PC-9 (cell line): ENCODE measurements at regions of chr18 and their contacts with region 1.

Region 1: DNA sequence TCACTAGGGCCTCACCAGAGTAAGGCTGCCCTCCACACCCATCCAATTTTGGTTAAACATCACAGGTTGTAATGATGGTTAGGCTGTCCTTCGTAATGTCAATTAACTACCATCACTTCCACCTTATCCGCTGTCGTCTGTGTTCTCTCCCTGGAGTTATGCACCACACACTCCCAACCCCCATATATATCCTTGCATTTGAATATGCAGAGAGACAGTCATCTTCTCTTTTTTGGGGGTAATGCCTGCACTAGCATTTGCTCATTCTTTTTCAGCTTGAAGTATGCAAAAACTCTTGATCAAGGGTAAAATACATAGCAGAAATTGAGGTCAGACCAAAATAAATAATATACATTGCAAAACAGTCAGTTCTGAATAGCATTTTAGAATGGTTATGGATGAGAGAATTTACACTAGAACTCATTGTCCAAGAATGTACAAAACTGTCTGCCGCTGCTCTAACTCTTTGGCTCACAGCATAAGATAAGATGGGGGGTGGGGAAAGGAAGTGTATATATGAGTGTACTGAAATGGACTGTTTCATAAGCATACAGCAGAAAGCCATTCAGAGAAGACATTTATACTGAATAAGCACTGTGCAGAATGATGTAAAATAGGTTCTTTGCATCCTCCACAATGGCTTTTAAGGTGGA is 397.8 kb upstream of the CHST9 start:
- DNase-seq: no peak
- H3K4me3 ChIP-seq: no peak overlapping the region
- H3K27ac ChIP-seq: no peak overlapping the region
- H3K4me1 ChIP-seq: no peaks in the 10 kb centered on the region
- H3K27me3 ChIP-seq: no peaks in the 10 kb centered on the region
- CTCF ChIP-seq: no peak

Region 2: DNA sequence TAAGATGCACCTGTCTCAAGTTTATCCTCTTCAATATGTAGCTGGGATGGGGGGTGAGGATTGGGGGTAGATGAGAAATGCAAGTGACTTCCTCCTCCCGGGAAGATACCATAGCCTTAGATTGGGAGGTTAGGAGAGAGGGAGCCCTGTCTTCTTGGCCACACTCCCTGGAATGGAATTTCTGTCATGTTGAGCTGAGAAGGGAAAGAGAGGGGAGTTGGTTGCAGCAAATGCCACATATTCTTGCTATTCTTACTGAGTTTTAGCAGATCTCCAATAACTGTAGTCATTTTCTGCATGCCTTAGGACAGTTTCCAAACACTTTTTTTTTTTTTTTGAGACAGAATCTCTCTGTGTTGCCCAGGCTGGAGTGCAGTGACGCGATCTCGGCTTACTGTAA is 1320.7 kb before region 1 on chr18:
- CTCF ChIA-PET with region 1: no interaction called
- POLR2A ChIA-PET with region 1: no interaction called
- intact Hi-C with region 1: loop called (anchors 5 kb)
- DNase-seq: no peak
- H3K4me3 ChIP-seq: no peak overlapping the region
- H3K27ac ChIP-seq: no peak overlapping the region
- H3K4me1 ChIP-seq: no peaks in the 10 kb centered on the region
- H3K27me3 ChIP-seq: no peaks in the 10 kb centered on the region
- CTCF ChIP-seq: no peak